ENCODE measurements at regions of chr11 and their contacts with region 1.

Region 1: GRCh38 chr11:125404776-125405435 is 91.2 kb downstream of the FEZ1 start:
- DNase-seq: peak; percentile 61 to 84 (median 74)
- ATAC-seq: peak; percentile 83 to 90 (median 89)
- H3K4me3 ChIP-seq: no peak overlapping the region
- H3K27ac ChIP-seq: no peak overlapping the region
- H3K4me1 ChIP-seq: peaks cover 0 to 26% (median 8%) of the 10 kb centered on the region in 12 donors
- H3K27me3 ChIP-seq: no peaks in the 10 kb centered on the region
- CTCF ChIP-seq: peak; percentile 87 to 98 (median 96)
- POLR2A ChIP-seq: no peak

Region 2: GRCh38 chr11:124961972-124962609 is 442.8 kb before region 1 on chr11:
- intact Hi-C with region 1: loop called in 4 of 10 experiments (anchors 2 to 10 kb)
- DNase-seq: no peak
- ATAC-seq: peak in 3 of 4 donors; percentile 81 to 85 (median 83)
- H3K4me3 ChIP-seq: no peak overlapping the region
- H3K27ac ChIP-seq: no peak overlapping the region
- H3K4me1 ChIP-seq: peaks cover 0 to 3% (median 0%) of the 10 kb centered on the region in 12 donors
- H3K27me3 ChIP-seq: no peaks in the 10 kb centered on the region
- CTCF ChIP-seq: peak; percentile 55 to 78 (median 70)
- POLR2A ChIP-seq: no peak

Region 3: GRCh38 chr11:125164422-125165110 is 240.3 kb before region 1 on chr11 and contains the start of gene PKNOX2:
- intact Hi-C with region 1: loop called in 8 of 10 experiments (anchors 1 to 10 kb)
- DNase-seq: peak; percentile 78 to 91 (median 84)
- ATAC-seq: peak; percentile 23 to 85 (median 82)
- H3K4me3 ChIP-seq: peak within 1 kb of the TSS; percentile 54 to 86 (median 68)
- H3K27ac ChIP-seq: peak within 1 kb of the TSS; percentile 35 to 86 (median 80)
- H3K4me1 ChIP-seq: peaks cover 0 to 47% (median 24%) of the 10 kb centered on the region in 12 donors
- H3K27me3 ChIP-seq: peaks cover 0 to 48% (median 2%) of the 10 kb centered on the region in 9 donors
- CTCF ChIP-seq: peak; percentile 37 to 84 (median 62)
- POLR2A ChIP-seq: peak in 1 of 2 donors; percentile 38
- total RNA-seq, gene PKNOX2: 3.1 to 9.4 (median 5.0) TPM

Region 4: GRCh38 chr11:125351033-125351867 is 53.7 kb before region 1 on chr11:
- intact Hi-C with region 1: loop called in 5 of 10 experiments (anchors 2 to 10 kb)
- DNase-seq: no peak
- ATAC-seq: no peak
- H3K4me3 ChIP-seq: no peak overlapping the region
- H3K27ac ChIP-seq: no peak overlapping the region
- H3K4me1 ChIP-seq: peaks cover 0 to 17% (median 4%) of the 10 kb centered on the region in 12 donors
- H3K27me3 ChIP-seq: no peaks in the 10 kb centered on the region
- CTCF ChIP-seq: no peak
- POLR2A ChIP-seq: no peak

Region 5: GRCh38 chr11:125376117-125376516 is 28.8 kb before region 1 on chr11:
- intact Hi-C with region 1: loop called in 1 of 10 experiments (anchors 2 kb)
- DNase-seq: peak; percentile 77 to 92 (median 80)
- ATAC-seq: peak; percentile 94 to 96 (median 94)
- H3K4me3 ChIP-seq: no peak overlapping the region
- H3K27ac ChIP-seq: peak overlapping the region in 11 of 12 donors; percentile 3 to 81 (median 58)
- H3K4me1 ChIP-seq: peaks cover 0 to 46% (median 25%) of the 10 kb centered on the region in 12 donors
- H3K27me3 ChIP-seq: no peaks in the 10 kb centered on the region
- CTCF ChIP-seq: peak in 2 of 12 donors; percentile 5 to 14
- POLR2A ChIP-seq: peak in 1 of 2 donors; percentile 50

Region 6: GRCh38 chr11:125429166-125429707 is 24.3 kb after region 1 on chr11:
- intact Hi-C with region 1: no loop called
- DNase-seq: peak; percentile 40 to 76 (median 58)
- ATAC-seq: no peak
- H3K4me3 ChIP-seq: no peak overlapping the region
- H3K27ac ChIP-seq: peak overlapping the region in 1 of 12 donors; percentile 42
- H3K4me1 ChIP-seq: peaks cover 0 to 39% (median 17%) of the 10 kb centered on the region in 12 donors
- H3K27me3 ChIP-seq: no peaks in the 10 kb centered on the region
- CTCF ChIP-seq: peak; percentile 40 to 70 (median 60)
- POLR2A ChIP-seq: no peak

Measured in heart left ventricle (tissue), 16 donors.